Activated T-helper 1 cell treated with anti-CD3 and anti-CD28 coated beads, Interleukin-12 subunit alpha, Interleukin-12 subunit beta, Interleukin-2, Interleukin-4 antibody, amounts not matched to agents 30 ng/mL and 10 ng/mL and 1 ng/mL, durations not matched to agents 14 hours and 24 hours and 36 hours (primary cell): ENCODE measurements at regions of chr10 and their contacts with region 1.

Region 1: GRCh38 chr10:68331455-68332258 is at the start of gene HNRNPH3:
- DNase-seq: peak; percentile 99
- H3K4me3 Mint-ChIP-seq: peak within 1 kb of the TSS; percentile 100
- H3K27ac Mint-ChIP-seq: peak within 1 kb of the TSS; percentile 99
- H3K4me1 Mint-ChIP-seq: peaks cover 66% of the 10 kb centered on the region
- H3K27me3 Mint-ChIP-seq: peaks cover 1% of the 10 kb centered on the region
- total RNA-seq, gene HNRNPH3: 176 and 184 TPM in 2 replicates

Region 2: GRCh38 chr10:67849331-67850011 is 482.2 kb before region 1 on chr10:
- intact Hi-C with region 1: loop called (anchors 1 kb)
- DNase-seq: peak; percentile 92
- H3K4me3 Mint-ChIP-seq: peak overlapping the region; percentile 91
- H3K27ac Mint-ChIP-seq: peak overlapping the region; percentile 95
- H3K4me1 Mint-ChIP-seq: no peaks in the 10 kb centered on the region
- H3K27me3 Mint-ChIP-seq: no peaks in the 10 kb centered on the region

Region 3: DNA sequence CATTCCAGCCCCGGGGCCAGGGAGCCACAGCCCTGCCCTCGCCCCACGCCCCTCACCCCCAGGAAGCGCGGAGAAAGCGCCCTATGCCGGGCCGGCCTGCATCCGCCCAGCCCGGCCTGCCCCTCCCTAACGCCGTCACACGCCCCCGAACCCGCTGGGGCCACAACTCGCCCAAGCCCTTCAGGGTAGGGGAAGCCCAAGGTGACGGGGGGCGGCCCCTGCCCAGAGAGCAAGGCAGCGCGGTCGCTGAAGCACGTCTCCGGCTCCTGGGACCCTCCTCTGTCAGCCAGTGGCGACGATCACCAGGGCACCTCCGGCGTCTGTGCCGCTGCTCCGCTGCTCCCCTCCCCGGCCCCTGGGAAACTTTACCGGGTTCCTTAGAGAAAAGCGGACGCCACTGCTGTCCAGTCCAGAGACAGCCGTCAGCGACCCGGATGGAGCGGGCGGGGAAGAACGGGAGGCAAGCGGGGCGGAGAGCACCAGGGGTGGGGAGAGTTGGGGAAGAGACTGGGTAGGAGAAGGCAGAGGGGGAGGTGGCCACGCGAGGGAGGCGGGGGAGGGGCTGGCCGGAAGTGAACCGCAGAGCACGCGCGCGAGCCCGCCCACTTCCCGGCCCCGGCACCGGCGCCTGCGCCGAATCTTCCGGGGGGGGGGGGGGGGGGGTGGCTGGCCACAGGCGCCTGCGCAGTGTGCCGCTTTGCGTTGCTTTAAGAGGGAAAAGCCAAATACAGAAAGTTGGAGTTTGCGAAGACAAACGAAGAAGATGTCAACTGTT is 256.7 kb before region 1 on chr10 and contains the start of gene HERC4:
- intact Hi-C with region 1: loop called (anchors 1 kb)
- DNase-seq: peak; percentile 82
- H3K4me3 Mint-ChIP-seq: peak within 1 kb of the TSS; percentile 97
- H3K27ac Mint-ChIP-seq: peak within 1 kb of the TSS; percentile 90
- H3K4me1 Mint-ChIP-seq: peaks cover 41% of the 10 kb centered on the region
- H3K27me3 Mint-ChIP-seq: peaks cover 2% of the 10 kb centered on the region
- total RNA-seq, gene HERC4: 42.3 and 53.1 TPM in 2 replicates

Region 4: GRCh38 chr10:68342909-68343516 is 11.4 kb after region 1 on chr10:
- intact Hi-C with region 1: loop called (anchors 1 kb)
- DNase-seq: no peak
- H3K4me3 Mint-ChIP-seq: no peak overlapping the region
- H3K27ac Mint-ChIP-seq: no peak overlapping the region
- H3K4me1 Mint-ChIP-seq: peaks cover 30% of the 10 kb centered on the region
- H3K27me3 Mint-ChIP-seq: no peaks in the 10 kb centered on the region

Region 5: GRCh38 chr10:68406815-68407548 is 75.3 kb after region 1 on chr10 and contains the start of gene RUFY2:
- intact Hi-C with region 1: loop called (anchors 1 kb)
- DNase-seq: peak; percentile 77
- H3K4me3 Mint-ChIP-seq: peak within 1 kb of the TSS; percentile 90
- H3K27ac Mint-ChIP-seq: peak within 1 kb of the TSS; percentile 80
- H3K4me1 Mint-ChIP-seq: peaks cover 13% of the 10 kb centered on the region
- H3K27me3 Mint-ChIP-seq: no peaks in the 10 kb centered on the region
- total RNA-seq, gene RUFY2: 10.4 and 12.3 TPM in 2 replicates

Region 6: DNA sequence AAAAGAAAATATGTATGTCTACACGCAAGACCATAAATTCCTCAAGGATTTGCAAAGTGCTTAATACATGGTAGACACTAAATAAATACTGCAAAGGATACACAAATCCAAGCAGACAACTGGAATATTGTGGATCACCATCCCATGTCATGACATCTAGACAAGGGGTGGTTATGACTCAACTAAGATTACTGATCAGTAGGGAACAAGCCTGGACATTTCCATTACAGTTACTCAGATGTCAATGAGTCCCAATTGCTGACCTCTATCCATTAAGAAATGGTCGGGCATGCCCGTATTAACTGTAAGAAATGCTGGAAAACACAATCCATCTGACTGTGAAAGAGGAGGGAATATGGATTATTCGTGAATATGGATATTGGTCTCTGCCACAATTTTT is 103.0 kb after region 1 on chr10:
- intact Hi-C with region 1: no loop called
- DNase-seq: no peak
- H3K4me3 Mint-ChIP-seq: no peak overlapping the region
- H3K27ac Mint-ChIP-seq: no peak overlapping the region
- H3K4me1 Mint-ChIP-seq: peaks cover 5% of the 10 kb centered on the region
- H3K27me3 Mint-ChIP-seq: no peaks in the 10 kb centered on the region

Region 7: GRCh38 chr10:68526626-68527307 is 195.1 kb after region 1 on chr10:
- intact Hi-C with region 1: loop called (anchors 2 kb)
- DNase-seq: no peak
- H3K4me3 Mint-ChIP-seq: peak overlapping the region; percentile 93
- H3K27ac Mint-ChIP-seq: peak overlapping the region; percentile 84
- H3K4me1 Mint-ChIP-seq: peaks cover 7% of the 10 kb centered on the region
- H3K27me3 Mint-ChIP-seq: no peaks in the 10 kb centered on the region

Region 8: DNA sequence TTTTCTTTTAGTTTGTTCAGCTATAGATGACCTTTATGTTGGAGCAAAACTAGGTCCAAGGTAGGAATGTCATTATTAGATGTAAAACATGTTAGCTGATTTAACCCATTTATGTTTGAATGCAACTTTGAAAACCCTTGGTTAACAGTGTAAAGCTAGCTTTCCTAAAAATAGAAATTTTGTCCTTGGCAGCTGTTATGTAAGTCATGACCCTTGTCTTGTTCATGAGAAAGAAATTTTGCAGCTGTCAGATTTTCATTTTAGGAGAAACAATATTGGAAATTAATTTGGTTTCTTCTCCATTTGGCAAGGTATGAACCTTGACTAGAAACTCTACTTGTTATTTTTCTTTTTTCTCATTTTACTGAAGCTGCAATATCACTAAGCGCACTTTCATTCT is 365.4 kb after region 1 on chr10:
- intact Hi-C with region 1: no loop called
- DNase-seq: no peak
- H3K4me3 Mint-ChIP-seq: no peak overlapping the region
- H3K27ac Mint-ChIP-seq: no peak overlapping the region
- H3K4me1 Mint-ChIP-seq: no peaks in the 10 kb centered on the region
- H3K27me3 Mint-ChIP-seq: peaks cover 5% of the 10 kb centered on the region